Transverse colon (tissue), 4 donors: ENCODE measurements at regions of chr17 and their contacts with region 1.

Region 1: GRCh38 chr17:46212634-46213435 is 19.6 kb upstream of the KANSL1 start:
- DNase-seq: peak; percentile 68
- H3K4me3 ChIP-seq: no peak overlapping the region
- H3K27ac ChIP-seq: peak overlapping the region; percentile 39 to 67 (median 52)
- H3K4me1 ChIP-seq: peaks cover 0 to 29% (median 6%) of the 10 kb centered on the region in 4 donors
- H3K27me3 ChIP-seq: no peaks in the 10 kb centered on the region
- CTCF ChIP-seq: peak; percentile 70 to 93 (median 74)
- EP300 ChIP-seq: no peak
- POLR2A ChIP-seq: no peak

Region 2: DNA sequence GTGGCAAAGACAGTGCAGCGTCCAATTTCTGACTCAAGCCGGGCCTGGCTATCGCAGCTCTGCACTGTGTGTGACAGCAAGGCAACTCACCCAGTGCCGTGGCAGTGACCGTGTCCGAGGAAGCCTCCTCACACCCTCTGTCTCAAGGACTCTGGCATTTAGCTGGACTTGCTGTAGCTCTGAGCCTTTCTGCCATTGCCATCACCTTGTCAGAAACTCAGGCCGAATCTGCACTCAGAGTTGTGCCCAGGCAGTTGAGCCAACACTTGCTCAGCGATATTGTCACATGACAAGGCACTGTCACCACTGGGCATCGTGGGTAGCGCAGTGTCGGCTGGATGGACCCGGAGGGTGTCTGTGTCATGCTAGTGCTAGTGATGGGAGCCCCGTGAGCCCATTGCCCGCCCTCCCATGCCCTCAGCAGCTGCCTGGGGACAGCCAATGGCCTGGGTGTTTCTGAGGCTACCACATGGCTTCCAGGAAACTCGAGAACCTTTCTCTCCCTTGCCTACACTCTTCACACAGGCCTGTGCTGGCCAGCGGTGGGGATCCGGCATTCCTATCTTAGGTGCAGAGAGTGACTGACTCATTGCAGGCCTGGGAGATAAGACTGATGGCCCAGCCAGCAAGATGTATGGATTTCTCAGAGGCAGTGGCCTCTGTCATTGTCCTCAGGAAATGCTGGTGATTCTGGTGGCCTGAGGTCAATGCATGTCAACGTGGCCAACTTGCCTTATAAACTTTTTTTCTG is 235.9 kb before region 1 on chr17:
- in situ Hi-C with region 1: no loop called
- intact Hi-C with region 1: no loop called
- DNase-seq: no peak
- H3K4me3 ChIP-seq: no peak overlapping the region
- H3K27ac ChIP-seq: no peak overlapping the region
- H3K4me1 ChIP-seq: peaks cover 0 to 8% (median 0%) of the 10 kb centered on the region in 4 donors
- H3K27me3 ChIP-seq: no peaks in the 10 kb centered on the region
- CTCF ChIP-seq: no peak
- EP300 ChIP-seq: no peak
- POLR2A ChIP-seq: no peak

Region 3: GRCh38 chr17:46002311-46002972 is 210.4 kb before region 1 on chr17:
- in situ Hi-C with region 1: loop called in 1 of 4 experiments (anchors 10 kb)
- intact Hi-C with region 1: loop called (anchors 5 kb)
- DNase-seq: peak; percentile 78
- H3K4me3 ChIP-seq: no peak overlapping the region
- H3K27ac ChIP-seq: no peak overlapping the region
- H3K4me1 ChIP-seq: peaks cover 0 to 19% (median 18%) of the 10 kb centered on the region in 4 donors
- H3K27me3 ChIP-seq: no peaks in the 10 kb centered on the region
- CTCF ChIP-seq: peak; percentile 96 to 99 (median 97)
- EP300 ChIP-seq: no peak
- POLR2A ChIP-seq: no peak

Region 4: DNA sequence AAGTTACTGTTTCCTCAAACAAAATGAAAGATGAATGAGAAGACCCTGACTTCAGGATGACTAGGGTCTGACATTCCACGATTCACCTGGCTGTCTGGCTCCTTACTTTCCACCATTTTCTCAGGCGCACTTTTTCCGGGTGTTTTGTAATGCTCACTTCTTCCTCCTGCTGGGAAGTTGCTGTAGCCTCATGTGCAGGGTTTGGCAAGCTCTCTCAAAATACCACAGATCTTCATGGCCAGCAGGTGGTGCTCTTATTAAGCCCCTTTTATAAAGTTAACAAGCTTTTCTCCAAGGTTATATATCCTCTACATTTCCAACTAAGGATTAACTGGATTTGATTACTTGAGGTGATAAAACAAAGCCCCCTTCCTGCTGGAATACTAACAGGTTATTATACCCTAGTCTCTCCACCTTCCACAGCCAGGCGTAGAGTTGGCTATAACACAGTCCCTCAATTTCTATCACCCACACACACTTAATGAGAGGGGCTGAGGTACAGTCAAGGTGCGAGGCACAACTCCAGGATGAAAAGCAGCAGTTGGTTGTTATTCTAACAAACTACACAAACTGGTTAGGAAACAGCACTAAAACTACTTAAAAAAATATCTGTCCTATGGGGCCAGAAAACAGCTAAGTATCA is 168.4 kb before region 1 on chr17:
- in situ Hi-C with region 1: loop called in 3 of 4 experiments (anchors 5 to 25 kb)
- intact Hi-C with region 1: loop called (anchors 5 kb)
- DNase-seq: peak; percentile 81
- H3K4me3 ChIP-seq: no peak overlapping the region
- H3K27ac ChIP-seq: peak overlapping the region; percentile 56 to 74 (median 65)
- H3K4me1 ChIP-seq: peaks cover 0 to 46% (median 34%) of the 10 kb centered on the region in 4 donors
- H3K27me3 ChIP-seq: no peaks in the 10 kb centered on the region
- CTCF ChIP-seq: peak; percentile 71 to 94 (median 79)
- EP300 ChIP-seq: no peak
- POLR2A ChIP-seq: no peak

Region 5: GRCh38 chr17:47099987-47100711 is 887.3 kb after region 1 on chr17:
- in situ Hi-C with region 1: loop called in 1 of 4 experiments (anchors 5 kb)
- intact Hi-C with region 1: no loop called
- DNase-seq: peak; percentile 96
- H3K4me3 ChIP-seq: peak overlapping the region; percentile 63 to 99 (median 93)
- H3K27ac ChIP-seq: peak overlapping the region; percentile 86 to 90 (median 88)
- H3K4me1 ChIP-seq: peaks cover 8 to 30% (median 14%) of the 10 kb centered on the region in 4 donors
- H3K27me3 ChIP-seq: no peaks in the 10 kb centered on the region
- CTCF ChIP-seq: peak in 1 of 5 experiments; percentile 34
- EP300 ChIP-seq: no peak
- POLR2A ChIP-seq: peak; percentile 48